Tibial artery (tissue), 4 donors: ENCODE measurements at regions of chr16 and their contacts with region 1.

Region 1: GRCh38 chr16:87571136-87571867 is 31.0 kb upstream of the JPH3 start:
- DNase-seq: peak; percentile 76 to 93
- H3K4me3 ChIP-seq: no peak overlapping the region
- H3K27ac ChIP-seq: peak overlapping the region; percentile 82 to 89
- H3K4me1 ChIP-seq: peaks cover 0 to 36% (median 26%) of the 10 kb centered on the region in 4 donors
- H3K27me3 ChIP-seq: no peaks in the 10 kb centered on the region
- CTCF ChIP-seq: peak; percentile 73 to 93

Region 2: GRCh38 chr16:87550496-87550961 is 20.8 kb before region 1 on chr16:
- intact Hi-C with region 1: loop called (anchors 2 kb)
- DNase-seq: no peak
- H3K4me3 ChIP-seq: no peak overlapping the region
- H3K27ac ChIP-seq: no peak overlapping the region
- H3K4me1 ChIP-seq: peaks cover 0 to 10% (median 3%) of the 10 kb centered on the region in 4 donors
- H3K27me3 ChIP-seq: no peaks in the 10 kb centered on the region
- CTCF ChIP-seq: peak; percentile 86 to 96

Region 3: GRCh38 chr16:87744750-87745514 is 173.6 kb after region 1 on chr16:
- intact Hi-C with region 1: no loop called
- DNase-seq: no peak
- H3K4me3 ChIP-seq: no peak overlapping the region
- H3K27ac ChIP-seq: no peak overlapping the region
- H3K4me1 ChIP-seq: no peaks in the 10 kb centered on the region
- H3K27me3 ChIP-seq: no peaks in the 10 kb centered on the region
- CTCF ChIP-seq: no peak